Activated CD4-positive, alpha-beta T cell treated with anti-CD3 and anti-CD28 coated beads, Interleukin-2, amount 10 ng/mL, durations not matched to agents 24 days and 14 days (primary cell): ENCODE measurements at regions of chr1 and their contacts with region 1.

Region 1: DNA sequence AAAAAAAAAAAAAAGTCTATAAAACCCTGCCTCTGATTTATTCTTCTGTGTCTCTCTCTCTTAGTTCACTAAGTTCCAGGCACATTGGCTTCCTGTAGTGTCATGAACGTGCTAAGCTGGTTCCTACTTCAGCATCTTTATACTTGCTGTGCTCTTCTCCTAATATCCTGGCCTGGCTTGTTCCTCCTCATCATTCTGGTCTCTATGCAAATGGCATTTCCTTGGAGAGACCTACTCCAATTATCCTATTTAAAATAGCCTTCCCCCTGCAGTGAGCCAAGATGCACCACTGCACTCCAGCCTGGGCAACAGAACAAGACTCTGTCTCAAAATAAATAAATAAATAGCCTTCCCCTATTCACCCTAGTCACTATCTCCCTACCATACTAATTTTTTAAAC is 9.7 kb upstream of the CLCC1 start:
- DNase-seq: no peak
- H3K4me3 Mint-ChIP-seq: no peak overlapping the region
- H3K27ac Mint-ChIP-seq: no peak overlapping the region
- H3K4me1 Mint-ChIP-seq: peaks cover 5% of the 10 kb centered on the region
- H3K27me3 Mint-ChIP-seq: no peaks in the 10 kb centered on the region

Region 2: DNA sequence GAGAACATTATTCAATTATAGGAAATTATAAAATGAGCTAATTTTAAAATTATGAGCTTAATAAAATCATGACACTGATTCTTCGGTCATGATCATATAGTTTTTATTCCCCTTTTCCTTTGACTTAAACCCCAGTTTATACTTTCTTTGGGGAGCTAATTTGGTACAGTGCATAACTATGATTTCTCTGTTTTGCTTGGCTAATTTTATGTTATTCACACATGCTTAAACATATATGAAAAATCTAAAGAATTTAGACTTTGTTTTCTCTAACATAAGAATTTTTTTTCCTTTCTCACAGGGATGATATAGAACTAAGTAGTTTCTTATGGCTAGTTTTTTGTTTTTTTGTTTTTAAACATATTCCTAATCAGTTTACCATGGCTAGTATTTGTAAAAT is 173.9 kb before region 1 on chr1:
- intact Hi-C with region 1: no loop called
- DNase-seq: no peak
- H3K4me3 Mint-ChIP-seq: no peak overlapping the region
- H3K27ac Mint-ChIP-seq: no peak overlapping the region
- H3K4me1 Mint-ChIP-seq: no peaks in the 10 kb centered on the region
- H3K27me3 Mint-ChIP-seq: no peaks in the 10 kb centered on the region

Region 3: DNA sequence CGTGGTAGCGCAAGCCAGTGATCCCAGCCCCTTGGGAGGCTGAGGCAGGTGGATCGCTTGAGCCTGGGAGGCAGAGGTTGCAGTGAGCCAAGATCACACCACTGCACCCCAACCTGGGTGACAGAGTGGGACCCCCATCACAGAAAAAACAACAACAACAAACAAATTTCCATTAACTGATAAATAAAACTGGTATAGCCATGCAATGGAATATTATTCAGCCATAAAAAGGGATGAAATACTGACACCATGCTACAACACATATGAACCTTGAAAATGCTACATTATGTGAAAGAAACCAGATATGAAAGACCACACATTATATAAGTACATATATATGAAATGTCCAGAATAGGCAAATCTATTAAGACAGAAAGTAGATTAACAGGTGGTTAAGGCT is 21.7 kb before region 1 on chr1:
- intact Hi-C with region 1: loop called (anchors 1 kb)
- DNase-seq: no peak
- H3K4me3 Mint-ChIP-seq: no peak overlapping the region
- H3K27ac Mint-ChIP-seq: no peak overlapping the region
- H3K4me1 Mint-ChIP-seq: peaks cover 20% of the 10 kb centered on the region
- H3K27me3 Mint-ChIP-seq: no peaks in the 10 kb centered on the region